Activated B cell treated with CpG ODN at 0.5 μM for 24 hours (primary cell): ENCODE measurements at regions of chr2 and their contacts with region 1.

Region 1: DNA sequence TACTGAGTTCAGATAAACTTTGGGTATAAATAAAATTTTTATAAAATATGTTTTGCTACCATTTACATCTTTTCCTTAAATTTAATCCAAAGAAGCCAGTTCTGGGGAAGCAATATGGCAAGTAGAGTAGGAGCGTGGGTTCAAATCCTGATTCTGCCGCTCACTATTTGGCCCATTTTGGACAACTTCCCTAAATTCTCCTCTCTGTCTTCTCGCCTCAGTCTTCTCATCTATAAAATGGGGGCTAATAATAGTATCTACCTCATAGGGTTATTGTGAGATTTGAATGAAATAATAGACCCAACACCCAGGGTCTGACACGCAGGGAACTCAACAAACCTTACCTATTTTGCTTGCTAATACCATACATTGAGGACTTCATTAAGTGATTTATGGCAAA is 59.7 kb downstream of the ACTR2 start:
- DNase-seq: no peak
- ATAC-seq: no peak
- H3K4me3 Mint-ChIP-seq: no peak overlapping the region
- H3K27ac Mint-ChIP-seq: no peak overlapping the region
- H3K4me1 Mint-ChIP-seq: no peaks in the 10 kb centered on the region
- H3K27me3 Mint-ChIP-seq: peaks cover 17% of the 10 kb centered on the region
- CTCF ChIP-seq: no peak

Region 2: DNA sequence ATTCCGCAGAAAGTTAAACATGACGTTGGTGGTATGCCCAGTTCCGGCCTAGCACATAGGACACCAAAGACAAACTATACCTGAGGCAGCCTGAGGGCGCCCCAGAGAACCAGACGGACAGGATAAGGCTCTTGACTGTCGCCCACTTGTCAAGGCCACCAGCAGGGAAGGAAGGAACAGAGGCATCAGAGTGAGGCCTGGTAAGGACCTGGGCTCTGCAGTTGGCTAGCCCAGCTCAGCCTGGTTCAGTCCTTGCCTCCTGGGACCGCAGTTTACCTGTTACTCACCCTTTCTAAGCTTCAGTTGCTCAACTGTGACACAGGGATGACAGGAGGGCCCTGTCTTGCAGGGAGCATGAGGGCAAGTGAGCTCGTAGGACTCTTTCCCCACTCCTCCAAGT is 22.3 kb after region 1 on chr2:
- CTCF ChIA-PET with region 1: no interaction called
- POLR2A ChIA-PET with region 1: interaction called, 11 read pairs
- intact Hi-C with region 1: no loop called
- DNase-seq: no peak
- ATAC-seq: no peak
- H3K4me3 Mint-ChIP-seq: no peak overlapping the region
- H3K27ac Mint-ChIP-seq: no peak overlapping the region
- H3K4me1 Mint-ChIP-seq: no peaks in the 10 kb centered on the region
- H3K27me3 Mint-ChIP-seq: peaks cover 7% of the 10 kb centered on the region
- CTCF ChIP-seq: no peak